Activated T-helper 1 cell treated with anti-CD3 and anti-CD28 coated beads, Interleukin-12 subunit alpha, Interleukin-12 subunit beta, Interleukin-2, Interleukin-4 antibody, amounts not matched to agents 30 ng/mL and 10 ng/mL and 1 ng/mL, durations not matched to agents 14 hours and 24 hours and 36 hours (primary cell): ENCODE measurements at regions of chr6 and their contacts with region 1.

Region 1: GRCh38 chr6:109073344-109074132 is 21.1 kb downstream of the SESN1 start:
- DNase-seq: peak; percentile 31
- H3K4me3 Mint-ChIP-seq: no peak overlapping the region
- H3K27ac Mint-ChIP-seq: no peak overlapping the region
- H3K4me1 Mint-ChIP-seq: peaks cover 21% of the 10 kb centered on the region
- H3K27me3 Mint-ChIP-seq: peaks cover 12% of the 10 kb centered on the region

Region 2: DNA sequence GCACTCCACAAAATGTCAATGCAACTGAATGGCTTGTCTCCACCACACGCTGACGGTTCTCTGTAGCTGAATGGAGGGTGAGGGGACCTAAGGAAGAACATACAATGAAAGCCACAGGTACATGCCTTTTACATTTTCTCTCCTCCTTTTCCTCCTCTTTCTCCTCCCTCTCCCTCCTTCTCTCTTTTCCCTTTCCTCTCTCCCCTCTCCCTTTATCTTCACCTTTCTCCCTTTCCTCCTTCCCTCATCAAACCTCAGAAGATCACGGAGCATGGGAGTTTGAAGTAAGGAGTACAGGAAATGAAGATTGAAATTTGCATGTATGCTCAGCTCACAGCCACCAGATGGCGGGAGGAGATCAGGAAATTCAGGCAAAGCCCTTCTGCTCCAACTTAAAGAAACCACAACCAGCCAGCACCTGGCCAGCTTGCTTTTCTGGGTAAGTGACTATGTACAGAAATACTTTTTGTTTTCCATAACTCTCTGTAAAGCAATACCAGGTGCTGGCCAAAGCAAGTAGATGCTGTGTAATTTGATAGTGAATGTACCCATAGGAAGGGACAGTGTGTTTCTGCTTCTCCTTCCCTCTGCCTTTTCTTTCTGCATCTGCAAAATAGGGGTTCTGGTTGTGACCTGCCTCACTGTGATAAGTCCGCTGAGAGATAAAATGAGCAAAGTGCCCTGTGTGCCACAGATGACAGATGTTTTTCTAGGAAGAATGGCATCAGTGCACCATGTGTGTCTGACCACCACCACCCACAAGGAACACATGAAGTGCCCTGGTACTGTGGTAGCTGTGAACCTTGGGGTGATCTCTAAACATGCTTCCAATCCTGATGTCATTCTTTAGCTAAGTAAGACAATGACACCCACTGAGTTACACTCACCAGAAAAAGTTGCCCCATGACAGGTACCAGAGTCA is 531.4 kb before region 1 on chr6:
- intact Hi-C with region 1: loop called (anchors 1 kb)
- DNase-seq: peak; percentile 52
- H3K4me3 Mint-ChIP-seq: no peak overlapping the region
- H3K27ac Mint-ChIP-seq: no peak overlapping the region
- H3K4me1 Mint-ChIP-seq: peaks cover 10% of the 10 kb centered on the region
- H3K27me3 Mint-ChIP-seq: peaks cover 39% of the 10 kb centered on the region

Region 3: GRCh38 chr6:108782179-108783041 is 291.1 kb before region 1 on chr6:
- intact Hi-C with region 1: loop called (anchors 1 kb)
- DNase-seq: peak; percentile 63
- H3K4me3 Mint-ChIP-seq: peak overlapping the region; percentile 65
- H3K27ac Mint-ChIP-seq: no peak overlapping the region
- H3K4me1 Mint-ChIP-seq: peaks cover 14% of the 10 kb centered on the region
- H3K27me3 Mint-ChIP-seq: peaks cover 58% of the 10 kb centered on the region

Region 4: DNA sequence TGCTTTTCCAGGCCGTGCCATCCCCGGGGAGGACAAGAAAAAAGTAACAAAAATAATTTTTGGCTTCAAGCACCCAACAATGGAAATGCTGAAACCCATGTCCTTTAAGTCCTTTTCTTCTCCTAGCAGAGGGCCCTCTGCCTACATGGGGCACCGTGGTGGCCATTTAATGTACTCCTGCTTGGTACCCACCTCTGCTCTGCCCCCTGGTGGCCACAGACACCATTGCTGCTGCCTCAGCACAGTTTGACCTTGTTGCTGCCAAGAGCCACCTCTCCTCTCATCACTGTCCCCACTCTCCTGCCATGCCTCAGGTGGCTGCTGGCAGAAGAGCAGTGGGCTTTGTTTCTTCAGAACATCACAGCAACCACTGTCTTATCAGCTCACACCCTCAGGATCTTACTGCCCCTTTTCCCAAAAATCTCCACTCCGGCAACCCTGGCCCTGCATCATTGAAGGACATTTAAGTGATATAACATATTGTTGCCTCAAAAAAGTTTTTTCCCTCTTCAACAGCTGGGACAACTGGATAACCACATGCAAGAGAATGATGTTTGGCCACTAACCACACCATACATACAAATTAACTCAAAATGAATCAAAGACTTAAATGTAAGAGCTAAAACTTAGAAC is 238.2 kb before region 1 on chr6:
- intact Hi-C with region 1: loop called (anchors 1 kb)
- DNase-seq: peak; percentile 74
- H3K4me3 Mint-ChIP-seq: no peak overlapping the region
- H3K27ac Mint-ChIP-seq: no peak overlapping the region
- H3K4me1 Mint-ChIP-seq: peaks cover 32% of the 10 kb centered on the region
- H3K27me3 Mint-ChIP-seq: peaks cover 16% of the 10 kb centered on the region

Region 5: DNA sequence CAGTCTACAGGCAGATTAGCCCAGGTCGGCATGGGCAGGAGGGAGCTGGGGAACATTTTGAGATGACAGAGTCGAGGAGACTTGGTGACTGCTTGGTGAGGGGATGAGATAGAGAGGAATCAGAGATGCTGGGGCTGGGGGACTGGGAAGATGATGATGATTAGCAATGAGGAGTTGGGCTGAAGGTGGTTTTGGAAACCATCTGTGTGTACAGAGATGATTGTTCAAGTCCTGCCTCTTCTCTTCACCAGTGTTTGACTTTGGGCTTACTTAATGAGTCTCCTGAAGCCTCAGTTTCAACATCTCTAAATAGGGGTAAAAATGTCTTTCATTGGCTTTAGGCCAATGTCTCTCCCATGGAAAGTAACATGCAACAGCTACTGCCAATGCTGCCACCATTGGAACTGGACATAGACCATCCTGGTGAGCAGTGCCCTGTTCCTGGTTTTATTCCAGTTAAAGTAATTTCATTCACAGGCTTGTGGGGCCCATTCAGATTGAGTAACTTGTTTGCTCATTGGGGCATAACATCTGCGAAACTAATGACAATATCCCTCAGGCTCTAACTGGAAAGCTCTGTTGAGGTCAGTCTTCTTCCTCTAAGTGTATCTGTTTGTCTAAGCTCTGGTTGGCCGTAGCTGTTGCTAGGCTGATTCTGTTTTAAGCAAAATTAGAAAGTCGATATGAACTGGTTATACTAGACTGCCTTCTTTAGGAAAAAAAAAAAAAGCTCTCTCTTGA is 126.3 kb before region 1 on chr6:
- intact Hi-C with region 1: loop called (anchors 1 kb)
- DNase-seq: no peak
- H3K4me3 Mint-ChIP-seq: peak overlapping the region; percentile 53
- H3K27ac Mint-ChIP-seq: peak overlapping the region; percentile 91
- H3K4me1 Mint-ChIP-seq: peaks cover 54% of the 10 kb centered on the region
- H3K27me3 Mint-ChIP-seq: peaks cover 7% of the 10 kb centered on the region